ENCODE measurements at regions of chr2 and their contacts with region 1.

Region 1: DNA sequence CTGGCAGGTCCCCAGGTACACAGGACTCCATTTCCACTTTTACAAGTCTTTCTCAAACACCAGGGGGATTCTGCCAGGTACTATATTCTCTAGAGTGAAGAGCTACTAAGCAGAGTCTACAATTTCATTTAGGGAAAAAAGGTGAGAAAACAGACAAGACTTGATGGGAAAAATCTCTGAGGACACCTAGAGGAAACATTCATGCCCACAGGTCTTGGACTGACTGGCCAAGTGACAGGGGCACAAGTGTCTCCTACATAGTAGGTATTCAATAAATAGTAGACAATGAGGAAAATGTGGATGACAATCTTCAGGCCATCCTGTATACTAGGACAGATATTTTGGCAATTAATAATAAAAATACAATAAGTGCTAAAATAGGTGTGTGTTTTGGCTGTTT is 228.6 kb downstream of the CLIP4 start:
- DNase-seq: peak in 1 of 2 experiments; percentile 13
- H3K4me3 ChIP-seq: no peak overlapping the region
- H3K27ac ChIP-seq: no peak overlapping the region
- H3K4me1 ChIP-seq: no peaks in the 10 kb centered on the region
- H3K27me3 ChIP-seq: peaks cover 92% of the 10 kb centered on the region
- CTCF ChIP-seq: no peak; the same call in 1 of the 2 replicates

Region 2: DNA sequence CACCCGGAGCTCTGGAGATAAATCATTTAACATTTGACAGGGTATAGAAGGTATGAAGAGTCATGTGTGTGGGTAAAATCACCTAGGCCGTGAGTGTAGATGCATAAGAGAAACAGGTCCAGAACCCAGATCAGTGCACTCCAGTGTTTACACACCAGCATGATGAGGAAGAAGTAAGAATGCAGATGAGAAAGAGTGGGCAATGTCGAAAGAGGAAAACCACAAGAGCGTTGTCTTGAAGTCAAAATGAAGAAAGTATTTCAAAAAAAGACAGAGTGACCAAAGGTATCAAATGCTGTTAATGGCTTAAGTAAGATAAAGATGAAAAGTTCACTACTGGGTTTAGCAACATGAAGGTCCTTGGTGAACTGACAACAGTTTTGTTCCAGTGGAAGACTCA is 879.9 kb before region 1 on chr2:
- CTCF ChIA-PET with region 1: no interaction called
- POLR2A ChIA-PET with region 1: no interaction called
- intact Hi-C with region 1: no loop called
- DNase-seq: no peak
- H3K4me3 ChIP-seq: no peak overlapping the region
- H3K27ac ChIP-seq: no peak overlapping the region
- H3K4me1 ChIP-seq: no peaks in the 10 kb centered on the region
- H3K27me3 ChIP-seq: no peaks in the 10 kb centered on the region
- CTCF ChIP-seq: no peak

Region 3: GRCh38 chr2:29480426-29480825 is 136.6 kb after region 1 on chr2:
- CTCF ChIA-PET with region 1: interaction called, 16 read pairs
- POLR2A ChIA-PET with region 1: no interaction called
- intact Hi-C with region 1: no loop called
- DNase-seq: no peak
- H3K4me3 ChIP-seq: no peak overlapping the region
- H3K27ac ChIP-seq: no peak overlapping the region
- H3K4me1 ChIP-seq: no peaks in the 10 kb centered on the region
- H3K27me3 ChIP-seq: peaks cover 91% of the 10 kb centered on the region
- CTCF ChIP-seq: no peak

Measured in PC-9 (cell line).